Tibial artery (tissue), 4 donors: ENCODE measurements at regions of chr10 and their contacts with region 1.

Region 1: GRCh38 chr10:51530541-51530940 is 168.9 kb downstream of the CSTF2T start:
- DNase-seq: no peak
- H3K4me3 ChIP-seq: no peak overlapping the region
- H3K27ac ChIP-seq: peak overlapping the region in 1 of 2 donors; percentile 37
- H3K4me1 ChIP-seq: peaks cover 0 to 69% (median 10%) of the 10 kb centered on the region in 4 donors
- H3K27me3 ChIP-seq: no peaks in the 10 kb centered on the region
- CTCF ChIP-seq: no peak

Region 2: GRCh38 chr10:51479711-51480110 is 50.8 kb before region 1 on chr10:
- intact Hi-C with region 1: no loop called
- DNase-seq: no peak
- H3K4me3 ChIP-seq: no peak overlapping the region
- H3K27ac ChIP-seq: no peak overlapping the region
- H3K4me1 ChIP-seq: peaks cover 0 to 33% (median 6%) of the 10 kb centered on the region in 4 donors
- H3K27me3 ChIP-seq: no peaks in the 10 kb centered on the region
- CTCF ChIP-seq: no peak

Region 3: DNA sequence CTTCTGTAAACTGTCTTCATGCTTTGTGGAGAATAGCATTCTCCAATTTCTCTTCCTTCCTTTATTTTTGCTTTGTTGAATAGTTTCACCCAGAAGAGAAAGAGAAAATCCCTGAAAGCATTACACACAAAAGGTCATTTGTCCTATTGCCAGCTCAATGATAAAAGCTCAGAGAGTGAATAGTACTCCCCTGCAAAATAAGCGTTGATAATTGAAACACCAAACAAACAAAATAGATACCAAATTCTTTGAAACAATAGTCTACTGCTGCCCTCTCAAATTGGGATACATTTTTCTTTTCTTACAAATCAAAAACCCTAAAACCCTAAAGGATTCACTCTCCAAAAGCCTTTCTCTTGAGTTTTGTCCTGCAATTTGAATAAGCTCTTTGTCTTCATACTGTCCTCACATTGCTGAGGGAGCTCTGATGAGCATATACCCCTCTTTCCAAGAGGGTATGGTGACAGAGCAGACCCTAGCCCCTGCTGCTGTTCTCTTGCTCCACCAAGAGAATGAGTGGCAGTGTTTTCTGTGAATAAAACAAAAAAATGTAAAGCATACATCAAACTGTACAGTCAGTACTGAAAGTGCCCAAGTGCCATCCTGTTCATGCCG is 34.5 kb after region 1 on chr10:
- intact Hi-C with region 1: loop called (anchors 1 kb)
- DNase-seq: no peak
- H3K4me3 ChIP-seq: no peak overlapping the region
- H3K27ac ChIP-seq: no peak overlapping the region
- H3K4me1 ChIP-seq: peaks cover 0 to 33% (median 0%) of the 10 kb centered on the region in 4 donors
- H3K27me3 ChIP-seq: no peaks in the 10 kb centered on the region
- CTCF ChIP-seq: no peak